Right ventricle myocardium inferior (tissue), 1 donor: ENCODE measurements at regions of chr12 and their contacts with region 1.

Region 1: GRCh38 chr12:59808317-59808910 is 212.6 kb downstream of the SLC16A7 start:
- DNase-seq: no peak
- ATAC-seq: no peak

Region 2: DNA sequence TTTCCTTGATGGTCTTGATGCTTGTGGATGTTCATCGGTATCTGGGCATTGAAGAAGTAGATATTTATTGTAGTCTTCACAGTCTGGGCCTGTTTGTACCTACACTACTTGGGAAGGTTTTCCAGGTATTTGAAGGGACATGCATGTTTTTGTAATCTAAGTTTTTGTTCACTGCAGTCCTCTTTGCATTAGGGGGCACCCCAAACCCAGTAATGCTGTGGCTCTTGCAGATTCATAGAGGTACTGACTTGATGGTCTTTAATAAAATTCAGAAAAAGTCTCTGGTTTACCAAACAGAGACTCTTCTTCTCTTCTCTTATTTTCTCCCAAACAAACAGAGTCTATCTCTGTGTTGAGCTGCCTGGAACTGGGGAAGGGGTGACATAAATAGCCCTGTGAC is 363.5 kb before region 1 on chr12:
- intact Hi-C with region 1: loop called (anchors 1 kb)
- DNase-seq: no peak
- ATAC-seq: no peak

Region 3: DNA sequence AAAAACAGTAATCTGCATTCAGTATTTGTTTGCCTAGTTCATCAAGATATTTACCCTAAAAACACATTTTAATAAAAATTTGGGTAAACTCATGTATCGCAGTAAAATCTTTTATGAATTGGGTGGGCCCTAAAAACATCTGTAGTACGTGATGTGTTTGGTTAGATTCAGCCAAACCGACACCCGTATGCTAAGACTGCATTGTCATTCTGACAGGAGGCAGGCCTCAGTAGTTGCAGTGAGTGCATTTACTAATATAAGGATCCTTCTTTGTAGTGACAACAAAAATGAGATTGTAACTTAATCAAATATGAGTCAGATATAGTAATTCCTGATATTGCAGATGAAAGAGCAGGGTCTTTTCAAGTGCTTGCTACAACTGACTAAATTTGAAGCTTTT is 20.8 kb before region 1 on chr12:
- intact Hi-C with region 1: no loop called
- DNase-seq: no peak
- ATAC-seq: no peak